ENCODE measurements at regions of chr4 and their contacts with region 1.

Region 1: DNA sequence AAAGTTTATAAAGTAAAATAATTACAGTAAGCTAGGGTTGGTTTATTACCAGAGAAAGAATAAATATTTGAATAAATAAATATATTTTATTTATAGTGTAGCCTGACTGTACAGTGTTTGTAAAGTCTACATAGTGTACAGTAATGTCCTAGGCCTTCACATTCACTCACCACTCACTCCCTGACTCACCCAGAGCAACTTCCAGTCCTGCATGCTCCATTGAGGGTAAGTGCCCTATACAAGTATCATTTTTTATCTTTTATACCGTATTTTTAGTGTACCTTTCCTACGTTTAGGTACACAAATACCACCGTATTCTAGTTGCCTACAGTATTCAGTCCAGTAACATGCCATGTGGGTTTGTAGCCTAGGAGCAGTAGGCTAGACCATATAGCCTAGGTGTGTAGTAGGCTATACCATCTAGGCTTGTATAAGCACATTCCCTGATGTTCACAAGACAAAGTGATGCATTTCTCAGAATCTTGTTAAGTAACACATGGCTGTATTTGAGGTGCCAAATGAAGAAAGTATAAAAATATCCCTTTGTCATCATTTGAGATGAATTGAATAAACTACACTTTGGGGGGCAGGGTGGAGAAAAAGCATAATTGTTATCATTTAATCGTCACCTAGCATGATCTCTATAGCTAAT is 14.7 kb upstream of the KLHL8 start:
- DNase-seq: peak in 1 of 9 experiments; percentile 5
- ATAC-seq: no peak
- H3K4me3 ChIP-seq: peak overlapping the region; percentile 52 to 61
- H3K4me3 Mint-ChIP-seq: peak overlapping the region; percentile 79
- H3K27ac ChIP-seq: no peak overlapping the region
- H3K27ac Mint-ChIP-seq: no peak overlapping the region
- H3K4me1 ChIP-seq: peaks cover 4% of the 10 kb centered on the region
- H3K4me1 Mint-ChIP-seq: peaks cover 2% of the 10 kb centered on the region
- H3K27me3 ChIP-seq: no peaks in the 10 kb centered on the region
- H3K27me3 Mint-ChIP-seq: no peaks in the 10 kb centered on the region
- CTCF ChIP-seq: no peak

Region 2: DNA sequence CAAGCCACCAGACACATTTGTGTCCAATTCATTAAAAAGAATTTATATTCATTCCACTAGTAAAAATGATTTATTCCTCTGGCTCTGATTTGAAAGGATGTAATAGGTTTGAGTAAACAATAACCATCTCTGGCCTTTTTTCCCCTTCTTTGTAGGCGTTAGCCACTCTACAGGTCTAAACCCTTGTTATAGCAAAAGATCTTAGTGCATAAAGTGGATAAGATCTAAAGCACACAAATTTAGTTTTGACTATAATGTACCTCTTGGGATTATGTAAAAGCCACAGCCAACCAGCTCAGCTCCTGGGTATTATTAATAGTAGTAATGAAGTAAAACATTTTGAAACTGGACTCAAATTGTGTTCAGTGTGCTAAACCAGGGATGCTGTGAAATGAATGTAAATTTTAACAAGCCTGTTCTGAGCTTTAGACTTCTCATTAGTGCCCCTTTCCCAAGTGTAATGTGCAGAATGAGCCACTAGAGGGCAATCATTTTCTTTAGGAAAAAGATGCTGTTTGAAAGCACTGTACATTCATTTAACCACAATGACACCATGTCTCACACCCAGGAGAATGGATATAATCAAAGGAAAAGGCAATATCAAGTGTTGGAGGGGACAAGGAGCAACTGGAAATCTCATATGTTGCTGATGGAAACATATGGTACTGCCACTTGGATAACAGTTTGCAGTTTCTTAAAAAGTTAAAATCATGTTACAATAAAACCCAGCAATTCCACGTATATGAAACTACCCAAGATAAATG is 84.5 kb before region 1 on chr4:
- CTCF ChIA-PET with region 1: interaction called, 86 read pairs
- POLR2A ChIA-PET with region 1: no interaction called
- intact Hi-C with region 1: loop called (anchors 1 kb)
- DNase-seq: peak in 8 of 9 experiments; percentile 17 to 78 (median 40)
- ATAC-seq: peak; percentile 84
- H3K4me3 ChIP-seq: no peak overlapping the region
- H3K4me3 Mint-ChIP-seq: no peak overlapping the region
- H3K27ac ChIP-seq: no peak overlapping the region
- H3K27ac Mint-ChIP-seq: no peak overlapping the region
- H3K4me1 ChIP-seq: no peaks in the 10 kb centered on the region
- H3K4me1 Mint-ChIP-seq: no peaks in the 10 kb centered on the region
- H3K27me3 ChIP-seq: no peaks in the 10 kb centered on the region
- H3K27me3 Mint-ChIP-seq: no peaks in the 10 kb centered on the region
- CTCF ChIP-seq: peak; percentile 91

Measured in CD8-positive, alpha-beta T cell (primary cell).